AG04449 (cell line): ENCODE measurements at regions of chr14 and their contacts with region 1.

Region 1: DNA sequence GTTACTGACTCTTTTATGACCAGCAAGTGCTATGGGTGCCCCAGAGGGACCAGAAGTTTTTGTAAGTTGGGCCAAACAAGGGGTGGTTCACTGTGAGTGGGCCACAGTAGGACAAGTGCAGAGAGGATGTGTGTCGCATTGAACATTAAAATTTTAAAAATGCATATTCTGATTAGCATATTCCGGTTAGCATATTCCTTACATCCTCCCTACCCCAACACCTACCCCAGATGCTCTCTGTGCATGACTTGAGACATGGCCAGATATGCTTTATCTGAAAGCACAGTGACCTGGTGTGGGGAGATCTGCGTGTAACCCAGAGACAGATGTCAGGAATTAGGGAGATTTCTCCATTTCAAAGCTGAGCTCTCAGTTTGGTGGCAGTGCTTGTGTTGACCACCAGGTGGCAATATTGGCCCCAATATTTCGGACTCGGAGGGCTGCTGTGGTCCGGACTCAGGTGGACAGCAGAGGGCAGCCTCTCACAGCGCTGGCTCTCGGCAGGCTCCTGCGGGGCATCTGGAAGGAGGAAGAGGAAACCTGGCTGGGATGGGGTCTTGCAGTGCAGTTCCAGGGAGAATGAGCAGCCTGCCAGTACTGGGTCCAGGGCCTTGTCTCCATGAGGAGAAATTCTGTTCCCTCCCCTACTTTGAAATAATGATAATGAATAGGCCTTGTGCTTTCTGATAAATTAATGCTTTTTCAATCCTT is 1.6 kb upstream of the CEBPE start:
- DNase-seq: no peak
- H3K4me3 ChIP-seq: no peak overlapping the region
- CTCF ChIP-seq: peak; percentile 99

Region 2: DNA sequence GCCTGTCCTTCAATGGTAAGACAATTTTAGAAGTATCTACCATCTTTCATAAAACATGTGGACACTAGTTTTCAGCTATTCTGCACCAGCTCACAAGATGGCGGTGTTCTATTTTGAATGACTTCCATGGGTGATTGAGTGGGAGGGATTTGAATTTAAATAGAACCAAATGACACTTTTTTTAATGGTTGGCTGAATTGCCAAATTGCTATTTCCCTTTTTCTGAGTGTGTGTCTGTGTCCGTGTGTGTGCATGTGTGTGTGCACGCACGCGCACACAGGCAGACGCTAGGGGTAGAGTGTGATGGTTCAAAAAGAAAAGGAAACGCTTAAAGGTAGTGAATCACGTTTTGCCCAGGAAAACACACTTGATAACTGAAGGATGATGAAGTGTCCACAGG is 894.3 kb before region 1 on chr14:
- CTCF ChIA-PET with region 1: no interaction called
- POLR2A ChIA-PET with region 1: no interaction called
- DNase-seq: no peak
- H3K4me3 ChIP-seq: no peak overlapping the region
- CTCF ChIP-seq: peak; percentile 5

Region 3: DNA sequence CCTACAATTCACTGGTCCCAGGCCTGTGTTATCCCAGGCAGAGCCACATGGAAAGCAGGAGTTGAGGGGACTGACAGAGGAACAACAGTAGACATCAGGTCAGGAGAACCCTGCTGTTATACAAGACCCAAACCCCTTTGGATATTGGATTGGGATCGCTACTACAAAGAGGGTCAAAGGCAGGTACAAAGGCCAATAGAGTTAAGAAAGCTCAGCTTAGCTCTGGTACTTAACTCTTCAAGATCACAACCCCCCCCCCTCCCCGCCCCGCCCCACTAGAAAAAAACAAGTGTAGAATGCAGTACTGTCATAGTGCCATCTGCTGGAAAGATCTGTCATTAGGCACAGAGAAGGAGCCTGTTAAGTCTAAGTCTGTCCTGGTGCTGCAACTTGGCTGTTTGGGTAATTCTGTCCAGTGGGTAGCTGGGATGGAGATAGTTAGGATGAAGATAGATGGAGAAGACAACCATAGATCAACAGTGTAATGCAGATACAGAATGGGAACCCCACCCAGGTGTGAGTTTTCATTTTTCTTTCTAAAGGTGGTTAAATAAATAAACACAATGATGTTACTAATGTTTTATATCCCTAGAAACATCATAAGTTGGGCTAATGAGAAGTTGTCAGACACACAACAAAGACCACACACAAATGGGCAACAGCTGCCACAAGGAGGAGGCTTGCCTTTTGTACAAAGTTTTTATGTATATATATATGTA is 220.5 kb before region 1 on chr14:
- CTCF ChIA-PET with region 1: no interaction called
- POLR2A ChIA-PET with region 1: no interaction called
- DNase-seq: no peak
- H3K4me3 ChIP-seq: no peak overlapping the region
- CTCF ChIP-seq: peak; percentile 72

Region 4: DNA sequence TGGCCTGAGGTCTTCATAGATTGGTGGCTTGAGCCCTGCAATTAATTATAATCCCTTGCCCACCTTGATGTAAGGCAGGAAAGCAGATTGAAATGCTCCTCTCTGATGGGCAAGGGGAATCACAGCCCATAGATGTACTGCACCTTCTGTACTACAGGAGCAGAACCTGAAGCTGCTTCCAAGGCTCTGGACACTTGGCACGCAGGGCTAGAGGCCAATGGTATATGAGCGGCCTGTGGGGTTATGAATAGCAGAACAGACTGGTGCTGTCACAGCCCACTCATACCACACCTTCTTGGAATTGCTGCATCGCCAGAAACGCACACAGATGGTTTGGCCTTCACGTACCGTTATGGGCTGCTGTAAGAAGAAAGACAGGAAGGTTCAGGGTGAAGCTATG is 200.0 kb before region 1 on chr14:
- CTCF ChIA-PET with region 1: no interaction called
- POLR2A ChIA-PET with region 1: no interaction called
- DNase-seq: no peak
- H3K4me3 ChIP-seq: no peak overlapping the region
- CTCF ChIP-seq: no peak

Region 5: DNA sequence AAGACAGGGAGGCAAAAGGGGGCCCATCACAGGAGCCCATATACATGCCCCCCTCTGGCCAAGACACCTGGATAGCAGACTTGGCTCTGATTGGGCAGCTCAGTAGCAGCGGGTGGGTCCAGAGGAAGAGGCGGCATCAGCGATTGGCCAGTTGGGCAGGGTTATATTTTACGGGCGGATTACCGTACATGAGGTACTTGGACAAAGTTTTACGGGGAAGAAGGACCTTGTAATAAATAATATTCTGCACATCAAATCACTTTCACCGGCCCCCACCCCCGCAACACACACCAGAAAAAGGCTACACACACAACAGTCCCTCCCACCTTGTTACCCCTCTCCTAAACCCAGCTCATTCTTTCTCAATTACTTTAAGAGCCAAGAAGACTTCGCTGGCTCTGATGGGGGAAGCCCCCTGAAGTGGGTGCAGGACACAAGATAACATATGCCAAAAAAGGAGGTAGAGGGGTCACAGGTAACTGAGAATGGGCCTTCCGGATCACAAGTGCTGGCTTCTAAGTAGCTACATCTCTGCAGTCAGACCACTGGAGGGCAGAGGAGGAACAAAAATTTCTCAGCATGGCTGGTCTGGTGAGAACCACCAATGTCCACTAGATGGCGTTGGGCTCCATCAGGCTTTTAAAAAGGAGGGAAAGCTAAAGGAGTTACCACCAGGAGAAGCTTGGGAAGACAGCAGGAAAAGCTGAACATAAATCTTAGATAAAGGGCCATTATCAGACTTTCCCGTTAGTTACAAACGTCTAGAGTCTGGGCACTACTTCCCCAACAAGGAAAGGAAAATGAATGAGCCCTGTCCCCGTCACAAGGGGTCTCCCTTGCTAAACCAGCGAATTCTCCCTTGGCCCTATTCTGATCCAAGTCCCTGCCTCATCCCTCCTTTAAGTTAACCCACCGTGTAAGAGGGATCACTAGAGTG is 52.0 kb before region 1 on chr14:
- CTCF ChIA-PET with region 1: interaction called, 214 read pairs
- POLR2A ChIA-PET with region 1: no interaction called
- DNase-seq: peak; percentile 61
- H3K4me3 ChIP-seq: peak overlapping the region; percentile 39
- CTCF ChIP-seq: peak; percentile 92

Region 6: GRCh38 chr14:23130871-23131270 is 10.2 kb after region 1 on chr14:
- CTCF ChIA-PET with region 1: interaction called, 59 read pairs
- POLR2A ChIA-PET with region 1: no interaction called
- DNase-seq: no peak
- H3K4me3 ChIP-seq: no peak overlapping the region
- CTCF ChIP-seq: no peak

Region 7: GRCh38 chr14:23154964-23155587 is 34.4 kb after region 1 on chr14:
- CTCF ChIA-PET with region 1: interaction called, 23 read pairs
- POLR2A ChIA-PET with region 1: no interaction called
- DNase-seq: peak; percentile 61
- H3K4me3 ChIP-seq: no peak overlapping the region
- CTCF ChIP-seq: no peak

Region 8: DNA sequence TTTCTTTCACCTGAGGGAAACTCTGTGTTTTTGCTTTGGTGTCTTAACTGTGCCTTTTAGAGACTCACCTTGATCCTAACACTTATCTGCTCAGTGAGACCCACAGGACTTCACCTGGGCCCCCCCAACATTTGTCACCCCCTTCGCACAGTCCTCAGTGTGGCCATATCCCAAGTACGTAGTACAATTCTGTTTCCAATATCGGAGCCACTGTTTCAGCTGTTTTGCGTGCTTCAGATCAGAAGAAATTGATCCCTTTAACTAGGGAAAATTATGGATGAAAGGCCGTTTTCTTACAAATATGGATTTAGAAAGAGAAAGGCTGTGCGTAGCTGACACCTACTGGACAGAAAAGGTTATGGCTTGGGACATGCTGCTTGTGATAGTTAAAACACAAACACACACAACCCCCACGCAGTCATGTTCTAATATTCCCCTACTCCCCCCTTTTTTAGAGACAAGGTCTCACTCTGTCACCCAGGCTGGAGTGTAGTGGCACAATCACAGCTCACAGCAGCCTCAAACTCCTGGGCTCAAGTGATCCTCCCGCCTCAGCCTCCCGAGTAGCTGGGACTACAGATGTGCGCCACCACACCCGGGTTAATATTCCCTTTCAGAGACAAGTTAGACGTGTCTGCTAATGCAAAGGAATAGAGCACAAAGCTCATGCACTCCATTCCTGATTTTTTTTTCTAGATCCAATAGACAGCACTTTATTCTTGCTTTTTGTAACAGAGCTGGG is 66.4 kb after region 1 on chr14:
- CTCF ChIA-PET with region 1: interaction called, 1,439 read pairs
- POLR2A ChIA-PET with region 1: interaction called, 4 read pairs
- DNase-seq: no peak
- H3K4me3 ChIP-seq: no peak overlapping the region
- CTCF ChIP-seq: peak; percentile 66

Region 9: DNA sequence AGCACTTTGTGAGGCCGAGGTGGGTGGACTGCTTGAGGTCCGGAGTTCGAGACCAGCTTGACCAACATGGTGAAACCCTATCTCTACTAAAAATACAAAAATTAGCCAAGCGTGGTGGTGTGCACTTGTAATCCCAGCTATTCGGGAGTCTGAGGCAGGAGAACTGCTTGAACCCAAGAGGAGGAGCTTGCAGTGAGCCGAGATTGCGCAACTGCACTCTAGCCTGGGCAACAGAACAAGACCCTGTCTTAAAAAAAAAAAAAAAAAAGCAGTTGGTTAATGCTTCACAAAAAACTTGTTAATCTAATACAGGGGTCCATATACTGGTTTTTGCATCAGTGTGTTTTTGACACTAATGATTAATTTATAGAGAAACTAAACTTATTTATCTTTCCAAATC is 81.3 kb after region 1 on chr14:
- CTCF ChIA-PET with region 1: interaction called, 41 read pairs
- POLR2A ChIA-PET with region 1: no interaction called
- DNase-seq: no peak
- H3K4me3 ChIP-seq: no peak overlapping the region
- CTCF ChIP-seq: no peak

Region 10: GRCh38 chr14:23215421-23215820 is 94.7 kb after region 1 on chr14:
- CTCF ChIA-PET with region 1: interaction called, 11 read pairs
- POLR2A ChIA-PET with region 1: no interaction called
- DNase-seq: no peak
- H3K4me3 ChIP-seq: no peak overlapping the region
- CTCF ChIP-seq: no peak

Region 11: GRCh38 chr14:23665375-23666192 is 544.9 kb after region 1 on chr14:
- CTCF ChIA-PET with region 1: no interaction called
- POLR2A ChIA-PET with region 1: no interaction called
- DNase-seq: peak; percentile 7
- H3K4me3 ChIP-seq: no peak overlapping the region
- CTCF ChIP-seq: peak; percentile 71